ENCODE measurements at regions of chr7 and their contacts with region 1.

Region 1: GRCh38 chr7:118013252-118014010 is 140.2 kb upstream of the CTTNBP2 start:
- DNase-seq: peak in 5 of 10 donors; percentile 8 to 60 (median 51)
- H3K4me3 ChIP-seq: no peak overlapping the region
- H3K27ac ChIP-seq: peak overlapping the region in 1 of 59 donors; percentile 52
- H3K27me3 ChIP-seq: no peaks in the 10 kb centered on the region
- CTCF ChIP-seq: no peak

Region 2: GRCh38 chr7:117827862-117828261 is 185.6 kb before region 1 on chr7:
- intact Hi-C with region 1: loop called in 1 of 2 experiments (anchors 10 kb)
- DNase-seq: no peak
- H3K4me3 ChIP-seq: peak overlapping the region in 2 of 59 donors; percentile 5 to 9
- H3K27ac ChIP-seq: peak overlapping the region in 58 of 59 donors; percentile 20 to 93 (median 83)
- H3K27me3 ChIP-seq: no peaks in the 10 kb centered on the region
- CTCF ChIP-seq: no peak